GM10248 (cell line): ENCODE measurements at regions of chr17 and their contacts with region 1.

Region 1: DNA sequence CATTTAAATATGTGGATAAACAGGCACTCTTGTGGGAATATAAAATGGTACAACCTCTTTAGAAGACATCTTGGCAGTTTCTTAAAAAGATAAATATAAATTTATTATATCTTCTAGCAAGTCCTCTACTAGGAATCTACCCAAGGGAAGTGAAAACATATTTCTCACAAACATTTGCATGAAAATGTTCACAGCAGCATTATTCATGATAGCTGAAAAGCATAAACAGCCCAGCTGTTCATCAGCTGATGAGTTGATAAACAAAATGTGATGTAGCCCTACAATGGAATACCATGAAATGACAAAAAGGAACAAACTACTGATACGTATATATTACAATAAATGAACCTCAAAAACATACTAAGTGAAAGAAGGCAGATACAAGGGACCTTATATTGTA is 12.0 kb downstream of the DGKE start:
- DNase-seq: no peak
- CTCF ChIP-seq: no peak

Region 2: DNA sequence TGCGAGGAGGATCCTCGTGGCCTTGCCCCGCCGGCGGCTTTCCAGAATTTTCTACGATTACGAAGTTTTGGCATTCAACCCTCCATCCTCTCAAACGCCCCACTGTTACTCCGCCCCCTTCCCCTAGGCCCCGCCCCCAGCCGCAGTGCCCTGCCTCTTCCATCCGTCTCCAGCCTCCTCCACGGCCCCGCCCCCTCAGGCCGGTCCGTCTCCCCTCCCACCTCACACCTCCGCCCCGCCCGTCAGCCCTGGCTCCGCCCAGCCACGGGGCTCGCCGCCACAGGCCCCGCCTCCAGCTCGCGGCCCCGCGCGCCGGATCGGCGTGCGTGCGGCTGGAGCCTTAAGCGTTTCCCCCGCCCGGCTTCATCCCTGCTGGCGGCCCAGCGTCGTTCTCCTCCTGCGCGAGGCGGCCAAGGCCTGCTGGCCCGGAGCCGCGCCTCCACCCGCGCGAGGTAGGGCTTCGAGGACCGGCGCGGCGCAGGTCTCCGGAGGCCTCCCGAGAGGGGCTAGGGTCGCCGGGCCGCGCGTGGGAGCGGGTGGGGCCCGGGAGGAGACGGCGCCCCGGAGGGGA is 12.0 kb before region 1 on chr17 and contains the starts of genes C17orf67 and DGKE:
- CTCF ChIA-PET with region 1: interaction called, 15 read pairs
- POLR2A ChIA-PET with region 1: interaction called, 3 read pairs
- DNase-seq: peak; percentile 99
- CTCF ChIP-seq: no peak